PC-9 (cell line): ENCODE measurements at regions of chr9 and their contacts with region 1.

Region 1: DNA sequence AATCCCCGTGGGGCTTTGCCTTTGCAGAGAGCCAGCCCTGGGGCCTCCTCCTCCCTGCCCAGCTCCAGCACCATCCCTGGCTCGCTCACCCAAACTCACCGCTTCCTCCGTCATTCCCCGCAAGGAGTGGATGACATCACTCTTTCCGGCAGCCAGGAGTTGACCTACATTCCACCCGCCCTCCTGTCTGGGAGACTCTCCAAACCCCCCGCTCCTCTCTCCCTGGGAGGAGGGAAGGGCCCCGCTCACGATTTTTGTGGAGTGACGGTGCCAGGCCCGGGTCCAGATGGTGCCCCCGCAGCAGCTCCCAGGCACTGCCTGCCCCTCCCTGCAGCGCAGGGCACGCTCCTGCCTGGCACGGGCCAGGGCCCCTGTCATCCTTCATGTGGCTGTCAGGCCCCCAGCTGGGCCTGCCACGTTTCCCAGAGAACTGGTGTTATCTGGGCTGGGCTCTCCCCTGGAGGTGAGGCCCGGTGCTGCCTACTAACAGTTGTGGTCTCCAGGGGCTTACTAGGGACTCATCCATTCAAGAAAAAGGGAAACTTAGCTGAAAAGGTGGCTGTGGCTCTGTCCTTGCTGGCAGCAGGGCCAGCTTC is 52.3 kb downstream of the NTNG2 start:
- DNase-seq: peak in 1 of 2 experiments; percentile 42
- H3K4me3 ChIP-seq: no peak overlapping the region
- H3K27ac ChIP-seq: no peak overlapping the region
- H3K4me1 ChIP-seq: no peaks in the 10 kb centered on the region
- H3K27me3 ChIP-seq: peaks cover 76% of the 10 kb centered on the region
- CTCF ChIP-seq: no peak

Region 2: DNA sequence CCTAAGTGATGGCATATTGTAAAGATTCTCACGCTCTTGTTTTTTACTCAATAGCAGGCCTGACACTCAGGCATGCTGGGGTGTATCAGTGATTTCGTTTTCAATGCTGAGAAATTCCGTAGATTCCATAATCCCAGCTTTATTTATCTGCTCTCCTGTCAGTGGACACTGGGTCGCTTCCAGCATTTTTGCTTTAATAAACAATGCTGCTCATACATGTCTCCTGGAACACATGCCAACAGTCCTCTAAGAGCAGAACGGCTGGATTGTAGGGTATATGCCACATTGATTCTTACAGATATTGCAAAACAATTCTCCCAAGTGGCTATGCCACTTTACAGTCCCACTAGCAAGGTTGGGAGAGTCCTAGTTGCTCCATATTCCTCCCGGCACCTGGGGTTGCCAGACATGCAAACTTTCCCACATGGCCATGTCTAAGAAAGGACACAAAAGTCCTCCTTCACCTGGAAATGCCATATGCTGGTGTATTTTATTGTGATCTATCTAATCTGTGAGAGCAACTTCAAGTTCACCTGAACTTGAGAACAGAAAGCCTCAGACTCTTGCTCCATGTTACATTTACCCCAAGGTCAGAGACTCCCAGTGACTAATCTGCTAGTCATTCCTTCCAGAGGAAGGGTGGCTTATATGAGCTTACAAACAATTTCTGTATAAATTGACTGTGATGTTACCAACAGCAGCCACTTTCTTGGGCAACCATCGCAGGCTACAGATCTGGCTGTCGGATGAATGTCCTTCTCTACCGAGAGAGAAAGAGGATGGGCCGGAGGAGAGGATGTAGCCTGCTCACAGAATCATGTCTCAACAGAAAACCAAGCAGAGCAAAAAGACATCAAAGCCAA is 556.0 kb before region 1 on chr9:
- CTCF ChIA-PET with region 1: no interaction called
- POLR2A ChIA-PET with region 1: interaction called, 10 read pairs
- intact Hi-C with region 1: no loop called
- DNase-seq: peak; percentile 50 to 96
- H3K4me3 ChIP-seq: peak overlapping the region; percentile 27; the same call in 1 of the 2 replicates
- H3K27ac ChIP-seq: peak overlapping the region; percentile 90
- H3K4me1 ChIP-seq: peaks cover 42% of the 10 kb centered on the region
- H3K27me3 ChIP-seq: no peaks in the 10 kb centered on the region
- CTCF ChIP-seq: no peak

Region 3: GRCh38 chr9:132185073-132186012 is 28.8 kb before region 1 on chr9:
- CTCF ChIA-PET with region 1: interaction called, 18 read pairs
- POLR2A ChIA-PET with region 1: no interaction called
- intact Hi-C with region 1: no loop called
- DNase-seq: no peak
- H3K4me3 ChIP-seq: no peak overlapping the region
- H3K27ac ChIP-seq: no peak overlapping the region
- H3K4me1 ChIP-seq: no peaks in the 10 kb centered on the region
- H3K27me3 ChIP-seq: peaks cover 94% of the 10 kb centered on the region
- CTCF ChIP-seq: no peak

Region 4: GRCh38 chr9:132244582-132245455 is 30.7 kb after region 1 on chr9:
- CTCF ChIA-PET with region 1: no interaction called
- POLR2A ChIA-PET with region 1: no interaction called
- intact Hi-C with region 1: no loop called
- DNase-seq: no peak
- H3K4me3 ChIP-seq: no peak overlapping the region
- H3K27ac ChIP-seq: no peak overlapping the region
- H3K4me1 ChIP-seq: no peaks in the 10 kb centered on the region
- H3K27me3 ChIP-seq: peaks cover 31% of the 10 kb centered on the region
- CTCF ChIP-seq: no peak

Region 5: GRCh38 chr9:132894356-132895240 is 680.5 kb after region 1 on chr9:
- CTCF ChIA-PET with region 1: no interaction called
- POLR2A ChIA-PET with region 1: no interaction called
- intact Hi-C with region 1: no loop called
- DNase-seq: peak; percentile 51 to 62
- H3K4me3 ChIP-seq: no peak overlapping the region
- H3K27ac ChIP-seq: no peak overlapping the region
- H3K4me1 ChIP-seq: peaks cover 19% of the 10 kb centered on the region
- H3K27me3 ChIP-seq: no peaks in the 10 kb centered on the region
- CTCF ChIP-seq: no peak